ENCODE measurements at regions of chr3 and their contacts with region 1.

Region 1: DNA sequence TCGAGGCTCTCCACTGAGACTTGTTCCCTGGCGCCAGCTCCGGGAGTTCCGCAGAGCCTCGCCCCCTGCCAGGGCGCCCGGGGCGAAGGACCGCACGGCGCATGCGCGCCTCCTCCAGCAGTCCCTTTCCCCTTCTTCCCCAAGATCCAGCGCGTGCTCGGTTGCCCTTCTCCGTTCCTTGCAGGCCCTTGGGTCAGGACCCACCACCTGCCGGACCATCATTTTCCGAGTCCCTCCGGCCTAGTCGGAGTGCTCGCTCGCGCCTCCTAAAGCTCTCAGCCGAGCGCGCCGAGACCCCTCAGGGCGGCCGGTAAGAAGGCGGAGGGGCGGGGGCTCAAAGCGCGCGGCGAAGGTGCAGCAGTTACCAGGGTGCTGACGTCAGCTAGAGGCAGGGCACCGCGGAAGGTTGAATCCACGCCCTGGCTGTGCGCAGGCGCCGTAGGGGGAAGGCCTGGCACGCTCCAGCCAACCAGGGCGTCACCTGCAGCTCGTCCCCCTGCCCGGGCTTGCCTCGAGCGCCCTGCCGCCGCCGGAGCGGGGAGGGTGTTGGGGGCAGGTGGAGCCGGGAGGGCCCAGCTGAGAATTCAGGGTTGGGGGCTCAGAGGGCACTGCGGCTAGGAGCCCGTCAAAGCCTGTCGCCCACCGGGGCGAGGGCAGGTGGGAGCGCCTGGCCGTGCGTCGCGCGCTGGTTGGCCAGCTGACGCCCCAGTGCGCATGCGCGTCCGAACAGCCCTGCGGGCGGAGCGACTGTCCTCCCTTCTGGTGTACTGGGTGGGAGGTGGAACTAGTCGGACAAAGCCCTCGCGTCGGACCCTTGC is at the start of gene TCAIM:
- DNase-seq: peak; percentile 97 to 100 (median 100)
- ATAC-seq: peak; percentile 97
- H3K4me3 ChIP-seq: peak within 1 kb of the TSS; percentile 91
- H3K4me3 Mint-ChIP-seq: peak within 1 kb of the TSS; percentile 92 to 99 (median 96)
- H3K27ac ChIP-seq: peak within 1 kb of the TSS; percentile 89
- H3K27ac Mint-ChIP-seq: peak within 1 kb of the TSS; percentile 87 to 99 (median 97)
- H3K4me1 ChIP-seq: peaks cover 14 to 16% of the 10 kb centered on the region in 2 donors
- H3K4me1 Mint-ChIP-seq: peaks cover 12 to 45% (median 34%) of the 10 kb centered on the region in 7 donors
- H3K27me3 ChIP-seq: no peaks in the 10 kb centered on the region
- H3K27me3 Mint-ChIP-seq: peaks cover 5 to 14% (median 7%) of the 10 kb centered on the region in 5 donors
- total RNA-seq, gene TCAIM: 7.7 to 19.8 (median 16.1) TPM

Region 2: DNA sequence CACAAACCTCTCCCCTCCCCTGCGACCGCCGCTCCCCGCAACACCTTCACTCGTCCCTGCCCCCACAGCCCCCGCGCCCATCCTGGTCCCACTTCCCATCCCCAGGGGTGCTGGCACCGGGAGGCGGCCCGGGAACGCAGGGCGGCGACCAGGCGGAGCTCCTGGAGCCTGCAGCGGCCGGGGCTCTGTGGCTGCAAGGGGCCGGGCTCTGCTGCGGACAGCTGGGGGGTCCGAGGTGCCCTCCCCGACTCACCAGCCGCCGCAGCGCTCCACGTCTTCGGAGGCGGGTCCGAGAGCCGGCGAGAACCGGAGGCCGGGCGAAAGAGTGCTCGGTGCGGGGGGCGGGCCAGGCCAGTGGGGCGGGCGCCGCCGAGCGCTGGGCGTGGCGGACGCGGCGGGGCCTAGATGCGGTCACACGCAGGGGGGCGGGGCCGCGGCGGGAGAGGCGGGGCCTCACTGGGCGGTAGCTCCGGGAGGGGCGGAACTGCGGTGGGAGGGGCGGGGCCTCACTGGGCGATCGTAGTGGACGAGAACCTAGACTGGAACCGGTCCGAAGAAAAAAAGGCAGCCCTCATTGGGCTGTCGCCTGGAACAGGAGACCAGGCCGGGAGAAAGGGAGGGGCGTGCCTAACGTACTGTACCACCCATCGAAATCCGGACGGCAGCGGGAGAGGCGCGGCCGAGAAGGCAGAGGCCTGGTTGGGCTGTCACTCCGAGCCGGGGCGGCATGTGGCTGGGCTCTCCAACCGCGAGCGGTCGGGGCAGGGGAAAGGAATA is 716.4 kb before region 1 on chr3 and contains the start of gene ANO10:
- CTCF ChIA-PET with region 1: no interaction called
- POLR2A ChIA-PET with region 1: no interaction called
- intact Hi-C with region 1: loop called (anchors 1 kb)
- DNase-seq: peak; percentile 82 to 99 (median 91)
- ATAC-seq: peak; percentile 97
- H3K4me3 ChIP-seq: peak within 1 kb of the TSS; percentile 84
- H3K4me3 Mint-ChIP-seq: peak within 1 kb of the TSS; percentile 82 to 94 (median 91)
- H3K27ac ChIP-seq: peak within 1 kb of the TSS; percentile 60
- H3K27ac Mint-ChIP-seq: peak within 1 kb of the TSS; percentile 68 to 92 (median 86)
- H3K4me1 ChIP-seq: peaks cover 11 to 15% of the 10 kb centered on the region in 2 donors
- H3K4me1 Mint-ChIP-seq: peaks cover 8 to 26% (median 23%) of the 10 kb centered on the region in 7 donors
- H3K27me3 ChIP-seq: no peaks in the 10 kb centered on the region
- H3K27me3 Mint-ChIP-seq: peaks cover 0 to 15% (median 0%) of the 10 kb centered on the region in 5 donors
- total RNA-seq, gene ANO10: 6.1 to 13.6 (median 9.3) TPM

Region 3: DNA sequence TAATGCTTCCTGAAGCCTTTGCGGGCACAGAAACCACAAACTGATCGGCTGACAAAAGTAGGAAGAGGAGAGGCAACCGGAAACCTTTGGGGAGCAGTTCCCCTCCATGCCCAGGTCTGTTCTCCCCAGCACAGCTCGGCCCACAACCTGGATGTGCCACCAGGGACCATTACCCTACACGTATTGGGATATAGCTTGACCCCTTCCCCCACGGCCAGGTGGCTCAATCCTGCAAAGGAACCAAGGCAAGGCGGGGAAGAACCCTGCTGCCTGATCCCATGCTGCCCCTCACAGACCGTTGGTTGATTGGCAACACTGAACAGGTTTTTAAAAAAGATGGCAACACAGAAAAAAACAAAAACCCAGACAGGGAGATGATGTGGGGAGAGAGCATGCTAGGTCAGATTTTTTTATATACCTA is 19.3 kb before region 1 on chr3:
- CTCF ChIA-PET with region 1: no interaction called
- POLR2A ChIA-PET with region 1: no interaction called
- intact Hi-C with region 1: no loop called
- DNase-seq: no peak
- ATAC-seq: no peak
- H3K4me3 ChIP-seq: no peak overlapping the region
- H3K4me3 Mint-ChIP-seq: no peak overlapping the region
- H3K27ac ChIP-seq: no peak overlapping the region
- H3K27ac Mint-ChIP-seq: no peak overlapping the region
- H3K4me1 ChIP-seq: no peaks in the 10 kb centered on the region
- H3K4me1 Mint-ChIP-seq: peaks cover 0 to 3% (median 0%) of the 10 kb centered on the region in 7 donors
- H3K27me3 ChIP-seq: no peaks in the 10 kb centered on the region
- H3K27me3 Mint-ChIP-seq: peaks cover 3 to 20% (median 13%) of the 10 kb centered on the region in 5 donors

Region 4: GRCh38 chr3:44439499-44440295 is 101.5 kb after region 1 on chr3:
- CTCF ChIA-PET with region 1: no interaction called
- POLR2A ChIA-PET with region 1: interaction called, 7 read pairs
- intact Hi-C with region 1: loop called (anchors 1 kb)
- DNase-seq: peak; percentile 14 to 81 (median 69)
- ATAC-seq: peak; percentile 88
- H3K4me3 ChIP-seq: peak overlapping the region; percentile 17
- H3K4me3 Mint-ChIP-seq: peak overlapping the region; percentile 66 to 85 (median 78)
- H3K27ac ChIP-seq: peak overlapping the region; percentile 65
- H3K27ac Mint-ChIP-seq: peak overlapping the region; percentile 88 to 97 (median 95)
- H3K4me1 ChIP-seq: peaks cover 16 to 24% of the 10 kb centered on the region in 2 donors
- H3K4me1 Mint-ChIP-seq: peaks cover 23 to 44% (median 40%) of the 10 kb centered on the region in 7 donors
- H3K27me3 ChIP-seq: no peaks in the 10 kb centered on the region
- H3K27me3 Mint-ChIP-seq: no peaks in the 10 kb centered on the region

Region 5: DNA sequence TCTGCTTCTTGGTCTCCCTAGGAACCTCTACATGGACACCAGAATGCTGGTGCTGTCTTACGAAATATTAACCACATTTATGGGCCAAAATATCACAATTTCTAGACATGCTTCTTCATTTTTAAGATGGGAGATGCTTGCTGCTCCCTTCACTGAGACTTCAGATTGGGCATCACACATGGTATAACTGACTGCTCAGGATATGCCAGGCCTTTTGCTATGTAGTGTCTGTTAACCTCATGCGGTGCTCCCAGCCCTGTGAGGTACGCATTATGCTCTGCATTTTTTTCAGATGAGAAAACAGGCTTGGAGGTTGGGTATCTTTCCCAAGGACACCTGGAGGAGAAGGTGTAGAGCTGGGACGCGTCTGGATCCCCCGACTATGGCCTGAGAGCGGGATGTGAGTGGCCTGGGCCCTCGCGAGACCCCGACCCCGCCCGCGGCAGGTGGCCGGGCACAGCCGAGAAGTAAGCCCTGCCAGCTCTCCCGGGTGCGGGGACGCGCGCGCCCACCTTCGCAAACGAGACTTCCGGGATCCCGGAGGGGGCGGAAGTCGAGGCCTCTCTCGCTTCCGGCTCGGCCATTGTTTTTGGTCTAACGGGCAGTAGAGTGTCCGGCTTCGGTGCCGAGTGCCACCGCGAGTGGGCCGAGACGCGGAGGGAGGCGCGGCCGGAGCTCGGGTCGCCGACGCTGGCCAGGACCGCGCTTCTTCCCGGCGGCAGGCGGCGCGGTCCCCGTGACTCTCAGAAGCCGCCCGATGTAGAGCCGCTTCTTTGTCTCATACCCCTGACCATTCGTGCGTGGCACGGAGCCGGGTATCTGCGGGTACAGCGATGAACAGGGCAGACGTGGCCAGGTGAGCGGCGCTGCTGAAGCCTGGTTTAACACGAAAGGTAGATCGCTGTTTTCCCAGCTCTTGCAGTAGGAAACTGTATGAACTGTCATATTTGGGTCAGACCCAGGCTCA is 216.7 kb after region 1 on chr3 and contains the start of gene ZKSCAN7:
- CTCF ChIA-PET with region 1: no interaction called
- POLR2A ChIA-PET with region 1: no interaction called
- intact Hi-C with region 1: loop called in 1 of 2 experiments (anchors 1 kb)
- DNase-seq: peak; percentile 12 to 49 (median 42)
- ATAC-seq: peak; percentile 71
- H3K4me3 ChIP-seq: peak within 1 kb of the TSS; percentile 87
- H3K4me3 Mint-ChIP-seq: peak within 1 kb of the TSS; percentile 78 to 94 (median 91)
- H3K27ac ChIP-seq: peak within 1 kb of the TSS; percentile 47
- H3K27ac Mint-ChIP-seq: peak within 1 kb of the TSS; percentile 6 to 94 (median 82)
- H3K4me1 ChIP-seq: peaks cover 9 to 14% of the 10 kb centered on the region in 2 donors
- H3K4me1 Mint-ChIP-seq: peaks cover 10 to 34% (median 26%) of the 10 kb centered on the region in 7 donors
- H3K27me3 ChIP-seq: no peaks in the 10 kb centered on the region
- H3K27me3 Mint-ChIP-seq: peaks cover 0 to 4% (median 1%) of the 10 kb centered on the region in 5 donors
- total RNA-seq, gene ZKSCAN7: 1.1 to 4.5 (median 1.7) TPM

Region 6: GRCh38 chr3:44861412-44862220 is 523.4 kb after region 1 on chr3 and contains the start of gene TMEM42:
- CTCF ChIA-PET with region 1: no interaction called
- POLR2A ChIA-PET with region 1: no interaction called
- intact Hi-C with region 1: loop called (anchors 1 to 2 kb)
- DNase-seq: peak; percentile 81 to 89 (median 84)
- ATAC-seq: peak; percentile 97
- H3K4me3 ChIP-seq: peak within 1 kb of the TSS; percentile 78
- H3K4me3 Mint-ChIP-seq: peak within 1 kb of the TSS; percentile 88 to 92 (median 91)
- H3K27ac ChIP-seq: peak within 1 kb of the TSS; percentile 76
- H3K27ac Mint-ChIP-seq: peak within 1 kb of the TSS; percentile 86 to 97 (median 92)
- H3K4me1 ChIP-seq: peaks cover 15 to 29% of the 10 kb centered on the region in 2 donors
- H3K4me1 Mint-ChIP-seq: peaks cover 23 to 48% (median 43%) of the 10 kb centered on the region in 7 donors
- H3K27me3 ChIP-seq: no peaks in the 10 kb centered on the region
- H3K27me3 Mint-ChIP-seq: no peaks in the 10 kb centered on the region
- total RNA-seq, gene TMEM42: 12.1 to 25.1 (median 16.4) TPM

Region 7: GRCh38 chr3:45688882-45689756 is 1350.9 kb after region 1 on chr3 and contains the start of gene SACM1L:
- CTCF ChIA-PET with region 1: no interaction called
- POLR2A ChIA-PET with region 1: no interaction called
- intact Hi-C with region 1: loop called in 1 of 2 experiments (anchors 2 kb)
- DNase-seq: peak; percentile 84 to 97 (median 95)
- ATAC-seq: peak; percentile 90
- H3K4me3 ChIP-seq: peak within 1 kb of the TSS; percentile 80
- H3K4me3 Mint-ChIP-seq: peak within 1 kb of the TSS; percentile 87 to 98 (median 95)
- H3K27ac ChIP-seq: peak within 1 kb of the TSS; percentile 96
- H3K27ac Mint-ChIP-seq: peak within 1 kb of the TSS; percentile 96 to 100 (median 99)
- H3K4me1 ChIP-seq: peaks cover 38 to 39% of the 10 kb centered on the region in 2 donors
- H3K4me1 Mint-ChIP-seq: peaks cover 40 to 74% (median 67%) of the 10 kb centered on the region in 7 donors
- H3K27me3 ChIP-seq: no peaks in the 10 kb centered on the region
- H3K27me3 Mint-ChIP-seq: peaks cover 0 to 5% (median 0%) of the 10 kb centered on the region in 5 donors
- total RNA-seq, gene SACM1L: 60.8 to 93.8 (median 70.5) TPM